CD4-positive, alpha-beta T cell (primary cell): ENCODE measurements at regions of chr10 and their contacts with region 1.

Region 1: DNA sequence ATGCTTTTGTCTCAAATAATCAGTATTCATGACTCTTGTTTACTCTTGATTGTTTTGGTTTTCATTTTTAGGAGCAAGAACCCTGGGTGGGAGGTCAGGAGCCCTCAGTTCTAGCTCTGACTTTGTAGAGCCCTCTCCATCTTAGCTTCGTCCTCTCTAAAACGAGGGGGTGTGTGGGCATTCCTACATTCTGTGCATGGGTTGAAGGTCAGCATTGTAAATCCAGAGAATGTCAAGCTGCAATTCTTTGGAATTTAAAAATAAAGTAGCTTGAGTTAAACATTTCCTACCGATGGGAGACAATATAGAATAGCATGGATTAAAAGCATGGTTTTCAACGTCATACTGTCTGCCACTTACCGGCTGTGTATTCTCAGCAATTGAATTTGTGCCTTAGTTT is 128.3 kb downstream of the PRPF18 start:
- DNase-seq: no peak
- ATAC-seq: no peak
- H3K4me3 ChIP-seq: no peak overlapping the region
- H3K4me3 Mint-ChIP-seq: no peak overlapping the region
- H3K27ac ChIP-seq: no peak overlapping the region
- H3K27ac Mint-ChIP-seq: no peak overlapping the region
- H3K4me1 ChIP-seq: peaks cover 20% of the 10 kb centered on the region
- H3K4me1 Mint-ChIP-seq: peaks cover 24% of the 10 kb centered on the region
- H3K27me3 ChIP-seq: no peaks in the 10 kb centered on the region
- H3K27me3 Mint-ChIP-seq: no peaks in the 10 kb centered on the region
- CTCF ChIP-seq: no peak

Region 2: DNA sequence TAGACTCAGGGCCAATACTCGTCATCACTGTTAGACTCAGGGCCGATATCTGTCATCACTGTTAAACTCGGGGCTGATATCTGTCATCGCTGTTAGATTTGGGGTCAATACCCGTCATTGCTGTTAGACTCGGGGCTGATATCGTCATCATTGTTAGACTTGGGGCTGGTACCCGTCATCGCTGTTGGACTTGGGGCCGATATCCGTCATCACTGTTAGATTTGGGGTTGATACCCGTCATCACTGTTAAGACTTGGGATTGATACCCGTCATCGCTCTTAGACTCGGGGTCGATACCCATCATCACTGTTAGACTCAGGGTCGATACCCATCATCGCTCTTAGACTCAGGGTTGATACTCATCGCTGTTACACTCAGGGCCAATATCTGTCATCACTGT is 242.7 kb before region 1 on chr10:
- CTCF ChIA-PET with region 1: no interaction called
- POLR2A ChIA-PET with region 1: no interaction called
- intact Hi-C with region 1: no loop called
- DNase-seq: no peak
- ATAC-seq: no peak
- H3K4me3 ChIP-seq: no peak overlapping the region
- H3K4me3 Mint-ChIP-seq: no peak overlapping the region
- H3K27ac ChIP-seq: no peak overlapping the region
- H3K27ac Mint-ChIP-seq: no peak overlapping the region
- H3K4me1 ChIP-seq: no peaks in the 10 kb centered on the region
- H3K4me1 Mint-ChIP-seq: no peaks in the 10 kb centered on the region
- H3K27me3 ChIP-seq: no peaks in the 10 kb centered on the region
- H3K27me3 Mint-ChIP-seq: no peaks in the 10 kb centered on the region
- CTCF ChIP-seq: no peak

Region 3: DNA sequence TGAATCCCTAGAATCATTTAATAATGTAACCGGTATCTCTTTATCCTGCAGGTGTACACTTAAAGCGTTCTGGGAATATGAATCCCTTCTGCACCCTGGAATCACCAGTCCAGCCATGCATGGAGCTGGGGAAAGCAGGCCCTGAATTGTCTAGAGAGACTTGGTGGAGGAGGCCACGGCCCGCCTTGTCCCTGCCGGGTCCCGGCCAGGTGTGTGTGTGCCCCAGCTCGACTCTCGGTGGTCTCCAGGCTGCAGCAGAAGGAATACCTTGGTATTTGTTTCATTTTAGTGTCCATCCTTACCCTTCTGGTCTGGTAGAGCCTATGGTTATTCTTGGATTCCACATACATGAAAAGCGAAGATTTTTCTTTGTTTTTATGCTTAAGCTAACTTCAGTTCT is 70.2 kb before region 1 on chr10:
- CTCF ChIA-PET with region 1: no interaction called
- POLR2A ChIA-PET with region 1: no interaction called
- intact Hi-C with region 1: loop called in 1 of 2 experiments (anchors 2 kb)
- DNase-seq: no peak
- ATAC-seq: no peak
- H3K4me3 ChIP-seq: no peak overlapping the region
- H3K4me3 Mint-ChIP-seq: no peak overlapping the region
- H3K27ac ChIP-seq: no peak overlapping the region
- H3K27ac Mint-ChIP-seq: no peak overlapping the region
- H3K4me1 ChIP-seq: peaks cover 9% of the 10 kb centered on the region
- H3K4me1 Mint-ChIP-seq: peaks cover 21% of the 10 kb centered on the region
- H3K27me3 ChIP-seq: no peaks in the 10 kb centered on the region
- H3K27me3 Mint-ChIP-seq: no peaks in the 10 kb centered on the region
- CTCF ChIP-seq: no peak

Region 4: GRCh38 chr10:13732465-13732881 is 17.4 kb after region 1 on chr10:
- CTCF ChIA-PET with region 1: no interaction called
- POLR2A ChIA-PET with region 1: no interaction called
- intact Hi-C with region 1: no loop called
- DNase-seq: no peak
- ATAC-seq: no peak
- H3K4me3 ChIP-seq: no peak overlapping the region
- H3K4me3 Mint-ChIP-seq: no peak overlapping the region
- H3K27ac ChIP-seq: no peak overlapping the region
- H3K27ac Mint-ChIP-seq: no peak overlapping the region
- H3K4me1 ChIP-seq: no peaks in the 10 kb centered on the region
- H3K4me1 Mint-ChIP-seq: no peaks in the 10 kb centered on the region
- H3K27me3 ChIP-seq: no peaks in the 10 kb centered on the region
- H3K27me3 Mint-ChIP-seq: no peaks in the 10 kb centered on the region
- CTCF ChIP-seq: no peak